ENCODE measurements at regions of chr15 and their contacts with region 1.

Region 1: GRCh38 chr15:40906091-40906990 is 12.1 kb downstream of the VPS18 start:
- DNase-seq: peak; percentile 89
- ATAC-seq: peak; percentile 79
- H3K4me3 Mint-ChIP-seq: peak overlapping the region; percentile 74
- H3K27ac Mint-ChIP-seq: peak overlapping the region; percentile 85
- H3K4me1 Mint-ChIP-seq: peaks cover 23% of the 10 kb centered on the region
- H3K27me3 Mint-ChIP-seq: no peaks in the 10 kb centered on the region
- CTCF ChIP-seq: peak; percentile 91

Region 2: DNA sequence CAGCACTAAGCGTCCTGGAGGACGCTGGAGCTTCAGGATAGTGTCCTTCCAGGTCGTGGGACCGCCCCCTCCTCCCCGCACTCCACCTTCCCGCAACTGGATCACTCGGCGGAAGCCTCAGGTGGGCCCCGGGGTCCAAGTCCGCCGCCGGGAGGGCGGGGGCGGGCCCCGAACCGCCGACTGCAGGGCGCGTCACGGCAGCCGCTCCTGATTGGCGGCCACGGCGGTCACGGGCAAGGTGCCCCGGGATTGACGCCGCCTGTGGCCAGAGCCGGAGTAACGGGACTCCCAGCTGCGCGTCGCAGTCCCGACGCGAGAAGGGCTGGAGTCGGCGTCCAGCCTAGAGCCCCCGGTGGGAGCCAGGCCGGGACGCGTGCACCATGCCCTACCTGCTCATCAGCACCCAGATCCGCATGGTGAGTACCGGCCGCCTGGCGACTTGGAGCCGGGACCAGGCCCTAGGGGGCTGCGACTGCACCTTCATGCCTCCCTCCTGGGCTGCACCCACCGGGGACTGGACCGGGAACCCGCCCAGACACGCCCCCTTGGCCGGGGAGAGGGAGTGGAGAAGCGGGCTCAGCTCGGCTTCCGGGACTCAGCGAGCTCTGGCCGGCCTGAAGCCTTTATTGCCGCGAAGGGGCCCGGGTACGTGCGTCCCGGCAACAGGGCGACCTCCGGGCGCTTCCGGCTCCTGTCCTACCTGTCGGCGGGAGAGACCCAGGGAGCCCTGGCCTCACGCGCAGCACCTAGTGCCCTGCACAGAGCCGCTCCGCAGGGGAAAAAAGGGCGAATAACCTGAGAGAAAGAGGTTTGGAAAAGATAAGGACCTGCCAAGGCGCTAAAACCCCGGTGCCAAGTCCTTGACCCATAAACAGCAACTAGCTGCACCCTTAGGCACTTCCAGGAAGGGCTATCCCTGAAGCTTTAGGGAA is 142.3 kb before region 1 on chr15 and contains the start of gene GCHFR:
- CTCF ChIA-PET with region 1: no interaction called
- POLR2A ChIA-PET with region 1: no interaction called
- intact Hi-C with region 1: no loop called
- DNase-seq: peak; percentile 78
- ATAC-seq: peak; percentile 54
- H3K4me3 Mint-ChIP-seq: peak within 1 kb of the TSS; percentile 86
- H3K27ac Mint-ChIP-seq: peak within 1 kb of the TSS; percentile 92
- H3K4me1 Mint-ChIP-seq: peaks cover 42% of the 10 kb centered on the region
- H3K27me3 Mint-ChIP-seq: no peaks in the 10 kb centered on the region
- CTCF ChIP-seq: peak; percentile 43
- total RNA-seq, gene GCHFR: 44.8 to 46.6 TPM

Region 3: DNA sequence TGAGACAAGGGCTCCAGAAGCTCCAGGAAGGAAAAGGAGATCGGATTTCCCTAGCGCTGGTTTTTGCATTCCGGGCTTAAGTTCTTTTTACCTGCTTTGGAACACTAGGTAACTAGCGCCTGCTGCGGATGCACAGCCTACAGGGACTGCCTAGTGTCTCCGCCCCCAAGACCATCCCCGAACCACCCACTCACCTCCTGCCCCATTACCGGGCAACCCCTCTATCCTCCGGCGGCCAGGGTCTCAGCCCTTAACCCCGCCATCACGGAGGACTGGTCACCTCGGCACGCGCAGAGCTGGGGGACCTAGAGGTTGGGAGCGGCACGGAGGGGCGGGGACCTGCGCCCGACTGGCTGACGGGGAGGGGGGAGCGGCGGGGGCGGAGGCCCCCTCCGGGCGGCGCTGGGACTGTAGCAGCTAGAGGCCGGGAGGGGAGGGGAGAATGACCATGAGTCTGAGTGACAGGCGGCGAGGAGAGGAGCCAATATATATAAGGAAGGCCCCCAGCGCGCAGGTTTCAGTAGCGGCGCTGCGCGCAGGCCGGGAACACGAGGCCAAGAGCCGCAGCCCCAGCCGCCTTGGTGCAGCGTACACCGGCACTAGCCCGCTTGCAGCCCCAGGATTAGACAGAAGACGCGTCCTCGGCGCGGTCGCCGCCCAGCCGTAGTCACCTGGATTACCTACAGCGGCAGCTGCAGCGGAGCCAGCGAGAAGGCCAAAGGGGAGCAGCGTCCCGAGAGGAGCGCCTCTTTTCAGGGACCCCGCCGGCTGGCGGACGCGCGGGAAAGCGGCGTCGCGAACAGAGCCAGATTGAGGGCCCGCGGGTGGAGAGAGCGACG is 22.7 kb after region 1 on chr15 and contains the start of gene DLL4:
- CTCF ChIA-PET with region 1: interaction called, 133 read pairs
- POLR2A ChIA-PET with region 1: interaction called, 5 read pairs
- intact Hi-C with region 1: no loop called
- DNase-seq: peak; percentile 57
- ATAC-seq: peak; percentile 53
- H3K4me3 Mint-ChIP-seq: peak within 1 kb of the TSS; percentile 58
- H3K27ac Mint-ChIP-seq: no peak within 1 kb of the TSS
- H3K4me1 Mint-ChIP-seq: peaks cover 50% of the 10 kb centered on the region
- H3K27me3 Mint-ChIP-seq: peaks cover 65% of the 10 kb centered on the region
- CTCF ChIP-seq: no peak
- total RNA-seq, gene DLL4: not detected

Region 4: GRCh38 chr15:40941528-40942336 is 35.4 kb after region 1 on chr15:
- CTCF ChIA-PET with region 1: interaction called, 88 read pairs
- POLR2A ChIA-PET with region 1: interaction called, 11 read pairs
- intact Hi-C with region 1: no loop called
- DNase-seq: peak; percentile 78
- ATAC-seq: peak; percentile 81
- H3K4me3 Mint-ChIP-seq: peak overlapping the region; percentile 79
- H3K27ac Mint-ChIP-seq: peak overlapping the region; percentile 74
- H3K4me1 Mint-ChIP-seq: peaks cover 34% of the 10 kb centered on the region
- H3K27me3 Mint-ChIP-seq: no peaks in the 10 kb centered on the region
- CTCF ChIP-seq: peak; percentile 63

Region 5: GRCh38 chr15:40952901-40953712 is 46.8 kb after region 1 on chr15 and contains the start of gene CHAC1:
- CTCF ChIA-PET with region 1: interaction called, 11 read pairs
- POLR2A ChIA-PET with region 1: interaction called, 4 read pairs
- intact Hi-C with region 1: loop called (anchors 10 kb)
- DNase-seq: peak; percentile 99
- ATAC-seq: peak; percentile 92
- H3K4me3 Mint-ChIP-seq: peak within 1 kb of the TSS; percentile 94
- H3K27ac Mint-ChIP-seq: peak within 1 kb of the TSS; percentile 95
- H3K4me1 Mint-ChIP-seq: peaks cover 28% of the 10 kb centered on the region
- H3K27me3 Mint-ChIP-seq: no peaks in the 10 kb centered on the region
- CTCF ChIP-seq: no peak
- total RNA-seq, gene CHAC1: 21.9 to 22.6 TPM

Region 6: DNA sequence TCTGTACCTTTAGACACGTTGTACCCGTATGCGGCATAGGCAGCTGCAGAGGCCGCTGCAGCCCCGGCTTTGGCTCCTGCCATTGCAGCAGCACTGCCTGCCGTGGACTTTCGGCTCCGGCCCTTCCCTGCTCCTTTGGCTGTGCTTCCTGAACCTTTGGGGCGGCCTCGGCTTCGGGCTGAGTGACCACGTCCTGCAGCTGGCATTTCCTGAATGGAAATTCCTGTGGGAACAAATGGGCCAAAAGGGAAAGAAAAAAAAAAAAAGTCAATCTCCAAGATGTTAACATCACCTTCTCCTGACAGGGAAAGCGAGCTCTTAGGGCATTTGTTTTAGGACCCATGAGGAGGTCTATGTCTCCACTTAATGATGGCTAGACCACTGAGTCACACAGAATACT is 76.5 kb after region 1 on chr15:
- CTCF ChIA-PET with region 1: interaction called, 15 read pairs
- POLR2A ChIA-PET with region 1: no interaction called
- intact Hi-C with region 1: no loop called
- DNase-seq: no peak
- ATAC-seq: no peak
- H3K4me3 Mint-ChIP-seq: no peak overlapping the region
- H3K27ac Mint-ChIP-seq: no peak overlapping the region
- H3K4me1 Mint-ChIP-seq: no peaks in the 10 kb centered on the region
- H3K27me3 Mint-ChIP-seq: no peaks in the 10 kb centered on the region
- CTCF ChIP-seq: no peak

Region 7: GRCh38 chr15:41022487-41023090 is 116.2 kb after region 1 on chr15:
- CTCF ChIA-PET with region 1: interaction called, 126 read pairs
- POLR2A ChIA-PET with region 1: interaction called, 3 read pairs
- intact Hi-C with region 1: loop called (anchors 10 kb)
- DNase-seq: peak; percentile 49
- ATAC-seq: peak; percentile 70
- H3K4me3 Mint-ChIP-seq: no peak overlapping the region
- H3K27ac Mint-ChIP-seq: no peak overlapping the region
- H3K4me1 Mint-ChIP-seq: no peaks in the 10 kb centered on the region
- H3K27me3 Mint-ChIP-seq: no peaks in the 10 kb centered on the region
- CTCF ChIP-seq: peak; percentile 67

Region 8: DNA sequence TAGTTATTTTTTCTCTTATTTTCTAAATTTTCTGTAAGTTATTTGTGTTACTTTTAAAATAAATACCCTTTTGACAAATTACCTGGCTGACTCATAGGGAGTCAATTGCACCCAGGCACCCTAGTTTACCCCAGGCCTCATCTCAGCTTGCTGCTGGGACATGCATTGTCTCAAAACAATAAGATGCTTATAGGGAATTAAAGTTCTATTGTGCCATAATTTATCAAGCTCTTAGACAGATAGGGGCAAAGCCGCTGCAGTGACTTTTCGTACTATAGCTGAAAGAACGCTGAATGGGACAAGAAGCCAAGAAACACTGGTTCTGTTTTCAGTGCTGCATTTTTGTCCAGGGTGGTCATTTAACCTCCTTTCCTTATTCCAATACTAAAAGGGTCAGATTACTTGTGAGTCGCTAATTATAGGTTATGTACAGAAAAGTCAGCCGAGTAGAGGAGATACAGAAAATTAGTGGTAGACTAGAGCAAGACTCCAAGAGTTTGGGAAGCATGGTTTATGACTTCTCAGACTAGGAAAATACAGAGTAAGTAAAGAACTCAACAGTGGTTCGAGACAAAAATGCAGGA is 274.0 kb after region 1 on chr15:
- CTCF ChIA-PET with region 1: interaction called, 96 read pairs
- POLR2A ChIA-PET with region 1: interaction called, 3 read pairs
- intact Hi-C with region 1: loop called (anchors 2 kb)
- DNase-seq: no peak
- ATAC-seq: no peak
- H3K4me3 Mint-ChIP-seq: no peak overlapping the region
- H3K27ac Mint-ChIP-seq: no peak overlapping the region
- H3K4me1 Mint-ChIP-seq: no peaks in the 10 kb centered on the region
- H3K27me3 Mint-ChIP-seq: no peaks in the 10 kb centered on the region
- CTCF ChIP-seq: no peak